ENCODE measurements at regions of chr2 and their contacts with region 1.

Region 1: DNA sequence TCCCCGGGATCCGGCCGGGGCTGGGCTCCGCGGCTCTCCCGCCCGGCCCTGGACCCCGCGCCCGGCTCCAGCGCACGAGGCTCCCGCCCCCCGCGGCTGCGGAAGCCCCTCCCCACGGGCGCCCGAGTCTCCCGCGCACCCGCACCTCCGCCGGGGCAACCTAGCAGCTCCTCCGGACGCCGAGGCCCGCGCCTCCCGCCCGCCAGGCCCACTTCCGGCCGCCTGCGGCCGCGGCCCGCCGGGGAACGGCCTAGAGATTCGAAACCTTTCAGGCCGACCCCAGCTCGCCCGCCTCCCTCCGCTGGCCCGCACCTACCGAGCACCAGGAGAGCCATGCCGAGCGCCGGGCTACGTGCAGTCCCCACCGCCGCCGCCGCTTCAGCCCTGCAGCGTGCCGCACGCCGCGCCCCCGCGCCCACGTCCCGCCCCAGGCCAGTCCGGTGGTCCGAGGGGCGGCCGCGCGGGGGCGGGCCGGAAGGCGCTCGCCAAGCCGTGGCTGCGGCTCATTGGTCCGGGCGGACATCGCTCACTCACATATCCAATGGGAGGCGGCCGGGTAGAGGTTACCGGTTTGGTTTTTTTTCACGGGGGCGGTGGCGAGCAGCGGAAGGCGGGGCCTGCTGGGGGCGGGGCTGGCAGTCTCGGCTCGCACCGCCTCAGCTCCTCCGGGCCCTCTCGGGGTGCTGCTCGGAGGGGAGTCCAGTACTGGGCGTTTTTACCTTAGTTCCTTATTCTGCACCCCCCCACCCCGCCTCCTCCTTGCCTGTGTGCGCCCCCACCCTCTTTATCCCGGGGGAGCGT is at the start of gene PDIA6:
- DNase-seq: peak; percentile 81
- ATAC-seq: peak; percentile 94
- H3K4me3 ChIP-seq: peak within 1 kb of the TSS; percentile 90
- H3K27ac ChIP-seq: peak within 1 kb of the TSS; percentile 85
- H3K4me1 ChIP-seq: peaks cover 3% of the 10 kb centered on the region
- H3K27me3 ChIP-seq: no peaks in the 10 kb centered on the region; a peak in 2 of 4 replicates
- CTCF ChIP-seq: no peak
- EP300 ChIP-seq: no peak
- POLR2A ChIP-seq: peak; percentile 86
- RAD21 ChIP-seq: no peak
- polyA plus RNA-seq, gene PDIA6: 180 to 234 TPM

Region 2: DNA sequence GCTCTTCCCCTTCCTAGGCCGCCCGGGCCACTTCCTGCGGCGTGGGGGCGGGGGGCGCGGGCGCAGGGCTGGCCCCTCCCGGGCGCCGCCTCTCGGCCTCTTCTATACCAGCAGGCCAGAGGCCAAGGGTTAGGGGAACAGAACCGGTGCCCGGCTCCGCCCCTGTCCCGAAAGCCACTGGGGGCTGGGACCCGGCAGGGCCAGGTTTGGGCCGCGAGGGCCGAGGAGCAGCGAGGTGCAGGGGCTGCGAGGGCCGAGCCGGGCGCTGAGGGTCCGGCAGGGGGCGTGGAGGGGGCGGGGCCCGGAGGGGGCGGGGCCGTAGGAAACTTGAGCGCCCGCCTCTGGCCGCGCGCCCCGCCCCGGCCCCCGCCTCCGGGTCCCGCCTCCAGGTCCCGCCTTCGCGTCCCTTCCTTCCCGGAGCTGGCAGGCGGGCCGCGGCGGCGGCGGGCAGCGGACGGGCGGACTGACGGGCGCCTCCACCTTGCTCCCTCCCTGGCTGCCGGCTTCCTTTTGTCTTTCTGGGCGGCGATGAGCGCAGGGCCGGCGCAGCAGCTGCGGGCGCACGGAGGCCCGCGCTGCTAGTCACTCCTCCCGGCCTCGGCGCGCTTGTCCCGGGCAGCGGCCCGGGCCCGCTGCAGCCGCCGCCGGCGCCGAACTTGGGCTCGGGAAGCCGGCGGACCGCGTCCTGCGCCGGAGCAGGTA is 509.9 kb before region 1 on chr2 and contains the start of gene HPCAL1:
- CTCF ChIA-PET with region 1: no interaction called
- POLR2A ChIA-PET with region 1: no interaction called
- RAD21 ChIA-PET with region 1: no interaction called
- SMC1A ChIA-PET with region 1: no interaction called
- in situ Hi-C with region 1: no loop called
- intact Hi-C with region 1: no loop called
- DNase-seq: peak; percentile 40
- ATAC-seq: peak; percentile 86
- H3K4me3 ChIP-seq: peak within 1 kb of the TSS; percentile 69
- H3K27ac ChIP-seq: peak within 1 kb of the TSS; percentile 61
- H3K4me1 ChIP-seq: peaks cover 16% of the 10 kb centered on the region
- H3K27me3 ChIP-seq: no peaks in the 10 kb centered on the region; a peak in 1 of 4 replicates
- CTCF ChIP-seq: peak; percentile 41 to 52 (median 45); a peak in 5 of 6 replicates
- EP300 ChIP-seq: no peak
- POLR2A ChIP-seq: no peak
- RAD21 ChIP-seq: peak; percentile 19; the same call in 1 of the 2 replicates
- polyA plus RNA-seq, gene HPCAL1: 0.40 to 1.3 TPM

Region 3: DNA sequence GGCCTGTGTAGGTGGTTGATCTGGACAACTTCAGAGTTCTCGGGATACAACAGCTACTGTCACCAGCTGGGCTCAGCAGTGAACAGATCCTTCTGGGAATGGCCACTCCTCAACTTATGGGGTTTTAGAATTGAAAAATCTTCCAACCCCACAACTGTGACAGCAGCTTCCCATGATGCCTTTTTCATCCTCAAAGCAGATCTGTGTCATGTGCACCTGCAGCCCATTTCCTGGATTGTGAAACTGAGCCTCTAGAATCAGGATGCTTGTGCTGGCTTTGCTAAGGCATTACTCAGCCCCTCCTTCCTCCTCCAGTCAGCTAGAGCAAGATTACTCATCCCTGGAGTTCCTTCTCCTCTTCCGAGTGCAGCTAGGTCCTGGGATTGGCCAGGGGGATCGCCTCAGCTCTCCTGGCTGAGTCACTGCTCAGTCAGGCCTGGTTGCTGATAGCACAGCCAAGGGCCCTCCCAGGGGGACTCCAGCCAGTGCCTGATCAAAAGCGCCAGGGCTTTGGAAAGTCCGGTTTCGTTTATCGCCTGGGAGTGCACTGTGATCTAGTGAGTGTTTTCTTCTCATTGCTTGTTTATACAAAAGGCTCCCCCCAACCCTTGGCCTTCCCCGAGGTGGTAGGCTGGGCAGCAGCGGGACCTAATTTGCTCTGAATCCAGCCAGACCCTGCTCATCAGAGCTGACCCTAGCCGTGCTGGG is 931.4 kb after region 1 on chr2:
- CTCF ChIA-PET with region 1: no interaction called
- POLR2A ChIA-PET with region 1: no interaction called
- RAD21 ChIA-PET with region 1: no interaction called
- SMC1A ChIA-PET with region 1: no interaction called
- in situ Hi-C with region 1: no loop called
- intact Hi-C with region 1: loop called (anchors 10 kb)
- DNase-seq: peak; percentile 82
- ATAC-seq: peak; percentile 73
- H3K4me3 ChIP-seq: peak overlapping the region; percentile 1; the same call in 1 of the 2 replicates
- H3K27ac ChIP-seq: peak overlapping the region; percentile 4; the same call in 1 of the 2 replicates
- H3K4me1 ChIP-seq: peaks cover 39% of the 10 kb centered on the region
- H3K27me3 ChIP-seq: no peaks in the 10 kb centered on the region
- CTCF ChIP-seq: no peak
- EP300 ChIP-seq: no peak; a peak in 2 of 4 replicates
- POLR2A ChIP-seq: peak; percentile 26; the same call in 1 of the 2 replicates
- RAD21 ChIP-seq: no peak